CD14-positive monocyte (primary cell): ENCODE measurements at regions of chr5 and their contacts with region 1.

Region 1: DNA sequence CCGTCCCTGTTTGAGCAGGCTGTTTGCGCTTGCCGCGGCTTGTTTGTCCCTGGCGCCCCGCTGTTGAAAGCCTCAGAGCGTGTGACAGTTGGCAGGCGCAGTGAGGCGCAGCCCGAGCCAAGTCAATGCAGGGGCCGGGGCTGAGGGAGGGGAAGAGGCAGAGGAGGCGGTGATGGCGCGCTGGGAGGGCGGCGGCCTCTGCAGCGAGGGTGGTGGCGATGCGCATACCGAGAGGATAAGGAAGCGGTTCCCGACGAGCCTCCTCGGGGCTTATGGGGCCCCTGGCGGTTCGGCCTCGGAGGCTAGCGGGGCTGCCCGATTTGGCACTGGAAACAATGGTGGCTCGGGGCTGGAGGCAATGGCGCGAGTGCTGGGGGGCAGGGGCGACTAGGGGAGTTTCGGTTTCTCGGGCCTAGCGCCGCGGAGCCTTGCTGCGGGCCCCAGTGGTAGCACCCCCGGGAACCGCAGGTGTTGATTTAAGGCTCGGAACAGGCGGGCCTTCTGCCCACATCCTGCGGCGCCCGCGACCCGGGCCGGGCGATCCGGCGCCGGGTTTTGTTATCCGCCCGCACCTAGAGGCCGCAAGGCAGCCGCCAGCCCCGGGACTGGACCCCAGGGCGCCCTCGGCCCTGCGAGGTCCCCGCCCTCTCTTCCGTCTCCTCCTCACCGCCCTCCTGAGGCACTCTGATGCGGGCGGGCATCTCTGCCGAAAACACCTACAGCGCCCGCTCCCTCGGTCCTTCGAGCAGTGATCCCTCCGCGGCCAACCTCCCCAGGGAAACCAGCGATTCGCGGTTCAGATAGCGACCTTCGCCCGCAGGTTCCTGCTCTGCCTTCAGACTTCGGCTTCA is 947 bp upstream of the LNPEP start:
- DNase-seq: peak; percentile 84 to 89 (median 86)
- H3K4me3 ChIP-seq: peak overlapping the region; percentile 70 to 94 (median 88)
- H3K4me3 Mint-ChIP-seq: peak overlapping the region; percentile 94 to 95
- H3K27ac ChIP-seq: peak overlapping the region; percentile 94 to 95
- H3K27ac Mint-ChIP-seq: peak overlapping the region; percentile 92 to 99 (median 97)
- H3K4me1 ChIP-seq: peaks cover 39 to 58% of the 10 kb centered on the region in 2 donors
- H3K4me1 Mint-ChIP-seq: peaks cover 60% of the 10 kb centered on the region
- H3K27me3 ChIP-seq: no peaks in the 10 kb centered on the region
- H3K27me3 Mint-ChIP-seq: no peaks in the 10 kb centered on the region
- CTCF ChIP-seq: no peak

Region 2: DNA sequence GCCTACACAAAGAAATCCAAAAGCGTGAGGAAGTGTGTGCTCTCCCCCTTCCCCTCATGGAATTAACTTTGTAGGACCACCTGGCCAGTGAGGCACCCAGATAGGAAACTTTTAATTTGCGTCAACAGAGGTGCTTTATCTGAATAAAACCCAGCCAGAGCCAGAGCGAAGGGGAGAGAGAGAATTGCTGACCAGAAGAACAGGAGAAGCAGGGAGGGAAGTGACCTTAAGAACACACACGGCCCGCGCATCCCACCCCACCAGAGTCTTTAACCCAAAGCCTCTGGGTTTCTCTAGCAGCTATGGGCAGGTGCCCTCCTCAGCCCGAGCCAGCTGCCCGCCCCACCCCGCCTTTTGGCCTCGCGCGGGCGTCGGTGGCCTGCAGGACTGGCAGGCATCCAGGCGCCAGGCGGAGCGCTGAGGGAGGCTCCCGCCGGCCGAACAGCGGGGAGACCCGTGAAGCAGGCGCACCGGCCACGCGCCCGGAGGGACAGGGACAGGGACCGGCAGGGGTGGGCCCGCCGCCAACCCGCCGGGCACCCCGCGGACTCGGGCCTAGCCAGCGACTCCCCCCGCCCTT is 127.8 kb before region 1 on chr5:
- intact Hi-C with region 1: loop called (anchors 5 to 10 kb)
- DNase-seq: peak; percentile 36 to 48 (median 47)
- H3K4me3 ChIP-seq: peak overlapping the region; percentile 78 to 88 (median 88)
- H3K4me3 Mint-ChIP-seq: peak overlapping the region; percentile 89 to 95
- H3K27ac ChIP-seq: peak overlapping the region; percentile 97
- H3K27ac Mint-ChIP-seq: peak overlapping the region; percentile 92 to 100 (median 98)
- H3K4me1 ChIP-seq: peaks cover 29 to 39% of the 10 kb centered on the region in 2 donors
- H3K4me1 Mint-ChIP-seq: peaks cover 46% of the 10 kb centered on the region
- H3K27me3 ChIP-seq: no peaks in the 10 kb centered on the region
- H3K27me3 Mint-ChIP-seq: peaks cover 0 to 3% (median 0%) of the 10 kb centered on the region in 3 donors
- CTCF ChIP-seq: no peak

Region 3: DNA sequence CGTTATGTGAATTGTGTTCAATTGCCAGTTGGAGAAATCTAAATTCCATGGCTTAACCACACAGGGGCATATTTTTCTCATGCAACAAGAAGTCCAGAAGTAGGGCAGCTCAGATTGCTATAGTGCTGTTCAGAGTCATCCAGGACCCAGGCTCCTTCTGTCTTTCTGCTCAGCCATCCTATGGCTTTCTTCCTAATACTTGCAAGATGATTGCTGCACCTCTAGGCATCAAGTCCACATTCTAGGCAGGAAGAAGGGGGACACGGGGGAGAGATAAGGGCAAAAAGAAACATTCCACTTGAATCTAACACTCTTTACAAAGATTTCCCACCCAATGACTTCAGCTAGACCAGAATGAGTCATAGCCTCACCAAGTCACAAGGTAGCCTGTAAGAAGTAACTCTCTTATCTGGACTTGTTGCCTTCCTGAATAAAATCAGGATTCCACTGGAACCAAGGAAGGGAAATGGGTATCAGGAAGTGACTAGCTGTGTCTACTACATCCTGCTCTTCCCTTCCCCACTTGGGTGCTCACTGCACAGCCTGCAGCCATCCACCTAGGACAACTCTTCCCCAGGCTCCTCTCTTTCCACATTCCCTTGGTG is 53.3 kb before region 1 on chr5:
- intact Hi-C with region 1: loop called (anchors 5 kb)
- DNase-seq: peak in 2 of 3 donors; percentile 42 to 75
- H3K4me3 ChIP-seq: peak overlapping the region in 2 of 3 experiments; percentile 31 to 66
- H3K4me3 Mint-ChIP-seq: peak overlapping the region; percentile 71 to 92
- H3K27ac ChIP-seq: peak overlapping the region; percentile 43 to 85
- H3K27ac Mint-ChIP-seq: peak overlapping the region; percentile 88 to 96 (median 94)
- H3K4me1 ChIP-seq: peaks cover 41 to 53% of the 10 kb centered on the region in 2 donors
- H3K4me1 Mint-ChIP-seq: peaks cover 54% of the 10 kb centered on the region
- H3K27me3 ChIP-seq: no peaks in the 10 kb centered on the region
- H3K27me3 Mint-ChIP-seq: peaks cover 0 to 2% (median 0%) of the 10 kb centered on the region in 3 donors
- CTCF ChIP-seq: no peak

Region 4: DNA sequence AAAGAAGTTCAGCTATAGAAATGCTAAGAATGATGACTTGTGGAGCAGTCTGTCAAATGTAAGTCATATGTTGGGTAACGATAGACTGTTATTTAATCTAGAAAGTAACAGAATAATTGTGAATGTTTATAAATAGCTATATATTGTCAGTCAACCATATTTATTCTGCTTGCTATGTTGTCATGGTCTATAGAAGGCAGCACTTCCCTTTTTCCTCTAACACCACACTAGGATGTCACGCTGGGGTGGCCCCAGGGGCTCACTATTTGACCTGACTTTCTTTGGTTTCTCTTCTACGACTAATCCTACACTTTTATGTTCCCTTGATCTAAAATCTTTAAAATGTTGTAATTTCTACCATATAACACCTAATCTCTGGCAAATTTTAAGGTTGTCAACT is 38.1 kb before region 1 on chr5:
- intact Hi-C with region 1: loop called in 1 of 2 experiments (anchors 5 kb)
- DNase-seq: peak; percentile 75 to 88 (median 83)
- H3K4me3 ChIP-seq: peak overlapping the region; percentile 35 to 85 (median 75)
- H3K4me3 Mint-ChIP-seq: peak overlapping the region; percentile 69 to 92
- H3K27ac ChIP-seq: peak overlapping the region in 1 of 2 donors; percentile 91
- H3K27ac Mint-ChIP-seq: peak overlapping the region; percentile 94 to 98 (median 97)
- H3K4me1 ChIP-seq: peaks cover 9 to 16% of the 10 kb centered on the region in 2 donors
- H3K4me1 Mint-ChIP-seq: peaks cover 12% of the 10 kb centered on the region
- H3K27me3 ChIP-seq: no peaks in the 10 kb centered on the region
- H3K27me3 Mint-ChIP-seq: no peaks in the 10 kb centered on the region
- CTCF ChIP-seq: no peak